Cardiac septum (tissue), 1 donor: ENCODE measurements at regions of chr4 and their contacts with region 1.

Region 1: DNA sequence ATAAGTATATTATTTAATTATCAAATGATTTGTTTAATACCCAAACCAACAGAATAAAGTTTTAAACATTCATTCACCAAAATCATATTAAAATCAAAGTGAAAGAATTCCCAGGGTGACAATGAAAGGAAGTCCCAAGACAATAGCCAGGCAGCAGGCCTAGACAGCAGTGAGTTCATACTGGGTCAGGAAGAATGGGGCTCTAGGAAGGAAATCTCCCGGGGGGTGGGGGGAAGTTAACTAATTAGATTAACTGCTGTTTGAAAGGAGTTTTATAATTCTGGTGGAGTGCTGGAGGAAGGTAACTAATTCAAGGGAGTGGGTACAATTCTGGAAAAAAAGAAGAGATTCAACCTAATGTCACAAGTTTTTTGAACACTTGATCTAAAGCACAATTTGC is 104.1 kb downstream of the ZAR1 start:
- DNase-seq: no peak

Region 2: GRCh38 chr4:48668254-48669017 is 74.3 kb after region 1 on chr4:
- intact Hi-C with region 1: loop called (anchors 5 kb)
- DNase-seq: no peak